Activated B cell treated with CpG ODN at 0.5 μM for 24 hours (primary cell): ENCODE measurements at regions of chr2 and their contacts with region 1.

Region 1: GRCh38 chr2:26052740-26053139 is 18.9 kb downstream of the RAB10 start:
- DNase-seq: no peak
- ATAC-seq: no peak
- H3K4me3 Mint-ChIP-seq: no peak overlapping the region
- H3K27ac Mint-ChIP-seq: no peak overlapping the region
- H3K4me1 Mint-ChIP-seq: peaks cover 60% of the 10 kb centered on the region
- H3K27me3 Mint-ChIP-seq: no peaks in the 10 kb centered on the region
- CTCF ChIP-seq: no peak

Region 2: GRCh38 chr2:26068602-26069298 is 16.0 kb after region 1 on chr2:
- CTCF ChIA-PET with region 1: no interaction called
- POLR2A ChIA-PET with region 1: no interaction called
- intact Hi-C with region 1: loop called (anchors 2 kb)
- DNase-seq: no peak
- ATAC-seq: peak; percentile 81
- H3K4me3 Mint-ChIP-seq: no peak overlapping the region
- H3K27ac Mint-ChIP-seq: peak overlapping the region; percentile 63
- H3K4me1 Mint-ChIP-seq: peaks cover 45% of the 10 kb centered on the region
- H3K27me3 Mint-ChIP-seq: no peaks in the 10 kb centered on the region
- CTCF ChIP-seq: no peak